Activated CD4-positive, alpha-beta T cell treated with anti-CD3 and anti-CD28 coated beads for 36 hours (primary cell): ENCODE measurements at regions of chr6 and their contacts with region 1.

Region 1: GRCh38 chr6:4055420-4056041 is 23.4 kb downstream of the FAM217A start:
- DNase-seq: peak; percentile 16
- ATAC-seq: no peak
- H3K4me3 Mint-ChIP-seq: no peak overlapping the region
- H3K27ac Mint-ChIP-seq: no peak overlapping the region
- H3K4me1 Mint-ChIP-seq: peaks cover 35% of the 10 kb centered on the region
- H3K27me3 Mint-ChIP-seq: no peaks in the 10 kb centered on the region

Region 2: GRCh38 chr6:4135665-4136353 is 80.3 kb after region 1 on chr6:
- CTCF ChIA-PET with region 1: interaction called, 5 read pairs
- POLR2A ChIA-PET with region 1: interaction called, 6 read pairs
- intact Hi-C with region 1: loop called (anchors 1 to 2 kb)
- DNase-seq: peak; percentile 98
- ATAC-seq: peak; percentile 92
- H3K4me3 Mint-ChIP-seq: peak overlapping the region; percentile 79
- H3K27ac Mint-ChIP-seq: peak overlapping the region; percentile 85
- H3K4me1 Mint-ChIP-seq: peaks cover 46% of the 10 kb centered on the region
- H3K27me3 Mint-ChIP-seq: no peaks in the 10 kb centered on the region

Region 3: DNA sequence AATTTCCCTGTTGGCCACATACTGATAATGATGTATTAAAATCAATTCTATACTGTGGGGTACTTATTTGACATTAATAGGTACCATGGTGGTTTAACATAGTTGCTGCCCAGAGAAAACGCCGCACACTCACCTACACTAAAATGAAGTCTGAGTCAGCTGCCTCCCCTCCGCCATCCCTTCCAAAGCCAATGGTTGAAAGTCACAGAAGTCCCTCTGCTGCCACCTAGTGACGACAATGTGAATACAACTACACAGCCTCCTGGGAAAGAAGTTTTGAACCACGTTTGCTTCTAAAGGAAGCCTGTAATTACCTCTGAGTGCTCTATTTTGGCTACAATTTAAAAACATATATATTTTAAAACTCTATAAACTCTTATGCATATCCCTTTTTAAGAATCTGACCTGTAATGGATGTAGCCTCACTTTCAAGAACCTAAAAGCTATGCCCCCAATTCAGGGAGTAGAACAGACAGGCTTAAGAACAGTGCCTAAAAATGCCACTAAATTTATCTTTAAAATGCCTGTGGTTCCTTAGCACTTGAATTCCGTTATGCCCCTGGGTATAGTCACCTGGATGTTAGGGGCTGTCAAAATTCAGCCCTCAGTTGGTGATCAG is 100.4 kb after region 1 on chr6:
- CTCF ChIA-PET with region 1: interaction called, 6 read pairs
- POLR2A ChIA-PET with region 1: no interaction called
- intact Hi-C with region 1: loop called (anchors 1 kb)
- DNase-seq: peak; percentile 88
- ATAC-seq: peak; percentile 99
- H3K4me3 Mint-ChIP-seq: no peak overlapping the region
- H3K27ac Mint-ChIP-seq: no peak overlapping the region
- H3K4me1 Mint-ChIP-seq: peaks cover 7% of the 10 kb centered on the region
- H3K27me3 Mint-ChIP-seq: no peaks in the 10 kb centered on the region

Region 4: DNA sequence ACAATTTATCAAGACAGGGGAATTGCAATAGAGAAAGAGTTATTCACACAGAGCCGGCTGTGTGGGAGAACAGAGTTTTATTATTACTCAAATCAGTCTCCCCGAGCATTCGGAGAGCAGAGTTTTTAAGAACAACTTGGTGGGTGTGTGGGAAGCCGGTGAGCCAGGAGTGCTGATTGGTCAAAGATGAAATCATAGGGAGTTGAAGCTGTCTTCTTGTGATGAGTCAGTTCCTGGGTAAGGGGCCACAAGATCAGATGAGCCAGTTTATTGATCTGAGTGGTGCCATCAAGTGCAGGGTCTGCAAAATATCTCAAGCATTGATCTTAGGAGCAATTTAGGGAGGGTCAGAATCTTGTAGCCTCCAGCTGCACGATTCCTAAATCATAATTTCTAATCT is 129.9 kb after region 1 on chr6:
- CTCF ChIA-PET with region 1: no interaction called
- POLR2A ChIA-PET with region 1: no interaction called
- intact Hi-C with region 1: loop called in 1 of 2 experiments (anchors 1 kb)
- DNase-seq: peak; percentile 79
- ATAC-seq: peak; percentile 83
- H3K4me3 Mint-ChIP-seq: no peak overlapping the region
- H3K27ac Mint-ChIP-seq: peak overlapping the region; percentile 5
- H3K4me1 Mint-ChIP-seq: peaks cover 11% of the 10 kb centered on the region
- H3K27me3 Mint-ChIP-seq: no peaks in the 10 kb centered on the region

Region 5: GRCh38 chr6:4210629-4211423 is 155.3 kb after region 1 on chr6:
- CTCF ChIA-PET with region 1: interaction called, 7 read pairs
- POLR2A ChIA-PET with region 1: no interaction called
- intact Hi-C with region 1: loop called in 1 of 2 experiments (anchors 2 kb)
- DNase-seq: peak; percentile 82
- ATAC-seq: peak; percentile 98
- H3K4me3 Mint-ChIP-seq: no peak overlapping the region
- H3K27ac Mint-ChIP-seq: no peak overlapping the region
- H3K4me1 Mint-ChIP-seq: peaks cover 15% of the 10 kb centered on the region
- H3K27me3 Mint-ChIP-seq: peaks cover 6% of the 10 kb centered on the region